ENCODE measurements at regions of chr15 and their contacts with region 1.

Region 1: GRCh38 chr15:55318588-55319494 is at the starts of genes PIGB and PIGBOS1:
- DNase-seq: peak; percentile 89
- ATAC-seq: peak; percentile 98
- H3K4me3 ChIP-seq: peak within 1 kb of the TSS; percentile 71
- H3K27ac ChIP-seq: peak within 1 kb of the TSS; percentile 94
- H3K4me1 ChIP-seq: peaks cover 2% of the 10 kb centered on the region; the same call in 1 of the 2 replicates
- H3K27me3 ChIP-seq: no peaks in the 10 kb centered on the region
- CTCF ChIP-seq: 0 out of 2 replicates have a peak, but pooled peaks have one; percentile 15
- POLR2A ChIP-seq: peak; percentile 66; the same call in 1 of the 2 replicates
- RAD21 ChIP-seq: peak; percentile 22; the same call in 1 of the 2 replicates
- total RNA-seq, gene PIGB: 11.8 and 17.5 TPM in 2 replicates
- total RNA-seq, gene PIGBOS1: 11.7 and 12.7 TPM in 2 replicates

Region 2: DNA sequence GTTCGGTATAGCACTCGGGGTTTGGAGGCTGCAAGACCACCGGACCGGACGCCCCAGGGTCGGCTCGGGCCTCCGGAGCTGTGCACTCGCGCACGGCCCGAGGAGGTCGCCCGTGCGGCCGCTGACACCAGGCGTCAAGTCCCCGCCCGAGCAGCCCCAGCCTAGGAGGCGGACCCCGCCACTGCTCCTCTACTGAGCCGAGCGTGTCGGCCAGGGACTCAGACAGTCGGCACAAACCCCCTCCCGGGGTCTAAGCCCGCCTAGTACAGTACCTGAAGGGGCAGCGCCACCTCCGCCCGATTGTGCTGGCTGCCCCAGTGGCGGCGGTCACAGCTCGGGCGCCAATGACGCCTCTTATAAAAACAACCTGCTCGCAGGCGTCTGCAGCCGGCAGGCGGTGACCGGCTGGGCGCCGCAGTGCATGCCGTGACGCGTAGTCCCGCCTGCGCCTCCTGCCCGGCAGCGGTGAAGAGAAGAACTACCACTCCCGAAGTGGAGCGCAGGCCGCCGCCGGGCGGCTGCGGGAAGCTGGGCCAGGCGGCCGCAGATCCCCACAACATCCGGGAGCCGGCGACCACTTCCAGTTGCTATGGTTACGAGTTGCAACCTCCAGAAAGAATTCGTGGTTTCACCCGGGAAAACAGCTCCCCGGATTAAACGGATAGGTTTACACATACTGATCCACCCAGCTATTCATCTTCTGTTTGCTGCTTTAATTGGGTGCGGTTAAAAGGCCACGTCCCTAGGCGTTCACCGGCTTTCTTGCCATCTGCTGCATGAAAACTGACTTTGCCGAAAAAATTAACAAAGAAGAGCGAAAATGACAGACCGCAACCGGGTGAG is 89.3 kb after region 1 on chr15 and contains the starts of genes CCPG1 and PIERCE2:
- CTCF ChIA-PET with region 1: interaction called, 5 read pairs
- POLR2A ChIA-PET with region 1: no interaction called
- dilution Hi-C with region 1: no loop called
- in situ Hi-C with region 1: no loop called
- intact Hi-C with region 1: loop called (anchors 1 kb)
- DNase-seq: peak; percentile 93
- ATAC-seq: peak; percentile 99
- H3K4me3 ChIP-seq: peak within 1 kb of the TSS; percentile 83
- H3K27ac ChIP-seq: peak within 1 kb of the TSS; percentile 53
- H3K4me1 ChIP-seq: no peaks in the 10 kb centered on the region
- H3K27me3 ChIP-seq: no peaks in the 10 kb centered on the region
- CTCF ChIP-seq: peak; percentile 85
- POLR2A ChIP-seq: peak; percentile 83
- RAD21 ChIP-seq: peak; percentile 35
- total RNA-seq, gene CCPG1: 14.3 and 18.9 TPM in 2 replicates
- total RNA-seq, gene PIERCE2: 0.28 and 0.36 TPM in 2 replicates